ENCODE measurements at regions of chr2 and their contacts with region 1.

Region 1: GRCh38 chr2:195559431-195559914 is 97.6 kb upstream of the SLC39A10 start:
- DNase-seq: peak; percentile 45 to 95 (median 72)
- ATAC-seq: peak; percentile 86
- H3K4me3 ChIP-seq: peak overlapping the region; percentile 11
- H3K4me3 Mint-ChIP-seq: peak overlapping the region; percentile 65
- H3K27ac ChIP-seq: peak overlapping the region; percentile 66 to 69
- H3K27ac Mint-ChIP-seq: peak overlapping the region; percentile 94
- H3K4me1 ChIP-seq: peaks cover 74% of the 10 kb centered on the region
- H3K4me1 Mint-ChIP-seq: peaks cover 77% of the 10 kb centered on the region
- H3K27me3 ChIP-seq: no peaks in the 10 kb centered on the region
- H3K27me3 Mint-ChIP-seq: no peaks in the 10 kb centered on the region
- CTCF ChIP-seq: no peak

Region 2: DNA sequence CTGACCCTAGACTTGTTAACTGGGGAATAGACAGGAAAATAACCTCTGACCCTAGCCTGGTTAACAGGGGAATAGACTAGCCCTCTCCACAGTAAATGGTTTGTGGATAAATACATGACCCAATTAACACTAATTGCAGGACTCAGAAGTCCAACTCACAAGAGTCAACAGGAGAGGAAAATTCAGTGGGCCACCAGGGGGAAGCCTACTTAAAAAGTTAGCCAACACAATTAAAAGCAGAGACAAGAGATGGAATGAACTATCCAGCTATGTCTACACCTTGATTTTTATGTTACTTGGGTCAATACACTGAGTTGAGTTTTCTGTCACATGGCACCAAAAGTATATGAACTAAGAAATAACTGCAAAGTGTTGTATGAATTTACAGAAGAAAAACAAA is 61.3 kb before region 1 on chr2:
- CTCF ChIA-PET with region 1: no interaction called
- POLR2A ChIA-PET with region 1: interaction called, 13 read pairs
- intact Hi-C with region 1: loop called (anchors 2 to 5 kb)
- DNase-seq: peak; percentile 39 to 82 (median 60)
- ATAC-seq: peak; percentile 60
- H3K4me3 ChIP-seq: no peak overlapping the region
- H3K4me3 Mint-ChIP-seq: no peak overlapping the region
- H3K27ac ChIP-seq: no peak overlapping the region
- H3K27ac Mint-ChIP-seq: no peak overlapping the region
- H3K4me1 ChIP-seq: peaks cover 6% of the 10 kb centered on the region
- H3K4me1 Mint-ChIP-seq: peaks cover 41% of the 10 kb centered on the region
- H3K27me3 ChIP-seq: no peaks in the 10 kb centered on the region
- H3K27me3 Mint-ChIP-seq: no peaks in the 10 kb centered on the region
- CTCF ChIP-seq: peak; percentile 79

Region 3: DNA sequence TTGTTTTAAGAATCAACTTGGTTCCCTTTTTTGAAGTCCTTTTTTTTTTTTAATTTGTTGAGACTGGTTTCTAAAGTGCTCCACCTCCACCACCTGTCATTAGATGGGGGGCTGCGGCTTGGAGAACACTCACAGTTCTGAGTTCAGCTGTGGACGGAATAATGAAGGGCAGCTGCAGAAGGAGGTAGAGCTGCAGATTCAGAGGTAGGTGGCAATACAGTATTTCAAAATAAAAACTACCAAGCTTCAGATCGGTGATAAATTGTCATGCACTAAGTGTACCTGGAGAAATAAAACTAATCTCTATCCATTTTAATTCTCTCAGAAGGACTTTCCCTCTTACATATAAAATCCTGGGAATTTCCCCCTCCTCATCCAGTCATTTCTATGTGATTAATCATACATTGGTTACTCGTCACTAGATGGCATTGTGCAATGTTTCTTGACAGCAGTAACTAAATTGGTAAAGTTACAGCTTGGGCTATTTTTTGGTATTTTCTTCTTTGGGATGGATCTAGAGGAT is 16.5 kb after region 1 on chr2:
- CTCF ChIA-PET with region 1: interaction called, 8 read pairs
- POLR2A ChIA-PET with region 1: interaction called, 32 read pairs
- intact Hi-C with region 1: no loop called
- DNase-seq: peak in 3 of 14 experiments; percentile 45 to 68 (median 67)
- ATAC-seq: no peak
- H3K4me3 ChIP-seq: no peak overlapping the region
- H3K4me3 Mint-ChIP-seq: peak overlapping the region; percentile 42
- H3K27ac ChIP-seq: no peak overlapping the region
- H3K27ac Mint-ChIP-seq: peak overlapping the region; percentile 76
- H3K4me1 ChIP-seq: peaks cover 25% of the 10 kb centered on the region
- H3K4me1 Mint-ChIP-seq: peaks cover 74% of the 10 kb centered on the region
- H3K27me3 ChIP-seq: no peaks in the 10 kb centered on the region
- H3K27me3 Mint-ChIP-seq: no peaks in the 10 kb centered on the region
- CTCF ChIP-seq: no peak

Measured in CD4-positive, alpha-beta T cell (primary cell).